ENCODE measurements at regions of chr11 and their contacts with region 1.

Region 1: GRCh38 chr11:125925247-125925740 is 20.6 kb upstream of the VSIG10L2 start:
- DNase-seq: no peak
- H3K4me3 ChIP-seq: no peak overlapping the region
- H3K4me1 ChIP-seq: no peaks in the 10 kb centered on the region
- H3K27me3 ChIP-seq: peaks cover 7% of the 10 kb centered on the region

Region 2: GRCh38 chr11:125807909-125808308 is 117.4 kb before region 1 on chr11:
- in situ Hi-C with region 1: no loop called
- DNase-seq: no peak
- H3K4me3 ChIP-seq: no peak overlapping the region
- H3K4me1 ChIP-seq: no peaks in the 10 kb centered on the region
- H3K27me3 ChIP-seq: peaks cover 5% of the 10 kb centered on the region; the same call in 1 of the 2 replicates

Region 3: DNA sequence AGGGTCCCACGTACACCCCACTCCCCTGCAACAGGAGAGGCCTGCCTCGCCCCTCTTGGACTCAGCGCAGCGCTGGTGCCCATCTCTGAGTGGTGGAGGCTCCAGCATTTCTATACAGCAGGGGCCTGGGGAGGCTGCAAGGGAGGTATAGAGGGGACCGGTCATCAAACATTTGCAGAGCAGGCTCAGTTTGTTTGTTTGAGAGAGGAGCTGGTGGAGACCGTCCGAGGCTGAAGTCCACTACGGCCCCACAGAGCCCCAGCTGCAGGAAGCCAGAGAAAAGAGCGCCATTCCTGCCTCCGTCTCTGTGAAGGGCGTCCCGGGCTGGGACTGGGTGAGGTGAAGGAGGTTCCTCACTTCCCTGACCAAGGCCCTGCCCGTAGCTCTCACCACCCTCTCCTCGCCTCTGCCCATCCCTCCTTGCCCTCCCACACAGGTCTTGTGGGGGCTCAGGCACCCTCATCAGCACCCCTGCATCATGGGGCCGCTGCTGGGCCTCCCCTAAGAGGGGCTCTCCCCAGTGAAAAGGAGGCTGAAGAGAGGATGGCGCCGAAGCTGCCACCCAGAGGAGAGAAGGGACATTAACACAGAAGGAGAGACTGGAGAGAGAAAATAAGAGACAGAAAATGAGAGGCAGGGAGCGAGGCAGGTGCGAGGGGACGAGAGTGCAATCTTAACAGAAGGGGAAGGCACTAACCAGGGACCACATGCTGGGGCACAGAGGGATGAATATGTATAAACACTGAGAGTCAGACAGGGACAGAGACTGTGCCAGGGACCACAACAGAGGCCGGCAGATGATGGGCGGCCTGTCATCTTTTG is 261.6 kb after region 1 on chr11:
- in situ Hi-C with region 1: loop called (anchors 5 kb)
- DNase-seq: no peak
- H3K4me3 ChIP-seq: no peak overlapping the region
- H3K4me1 ChIP-seq: no peaks in the 10 kb centered on the region
- H3K27me3 ChIP-seq: no peaks in the 10 kb centered on the region

Measured in HAP-1 (cell line).